ENCODE measurements at regions of chr10 and their contacts with region 1.

Region 1: DNA sequence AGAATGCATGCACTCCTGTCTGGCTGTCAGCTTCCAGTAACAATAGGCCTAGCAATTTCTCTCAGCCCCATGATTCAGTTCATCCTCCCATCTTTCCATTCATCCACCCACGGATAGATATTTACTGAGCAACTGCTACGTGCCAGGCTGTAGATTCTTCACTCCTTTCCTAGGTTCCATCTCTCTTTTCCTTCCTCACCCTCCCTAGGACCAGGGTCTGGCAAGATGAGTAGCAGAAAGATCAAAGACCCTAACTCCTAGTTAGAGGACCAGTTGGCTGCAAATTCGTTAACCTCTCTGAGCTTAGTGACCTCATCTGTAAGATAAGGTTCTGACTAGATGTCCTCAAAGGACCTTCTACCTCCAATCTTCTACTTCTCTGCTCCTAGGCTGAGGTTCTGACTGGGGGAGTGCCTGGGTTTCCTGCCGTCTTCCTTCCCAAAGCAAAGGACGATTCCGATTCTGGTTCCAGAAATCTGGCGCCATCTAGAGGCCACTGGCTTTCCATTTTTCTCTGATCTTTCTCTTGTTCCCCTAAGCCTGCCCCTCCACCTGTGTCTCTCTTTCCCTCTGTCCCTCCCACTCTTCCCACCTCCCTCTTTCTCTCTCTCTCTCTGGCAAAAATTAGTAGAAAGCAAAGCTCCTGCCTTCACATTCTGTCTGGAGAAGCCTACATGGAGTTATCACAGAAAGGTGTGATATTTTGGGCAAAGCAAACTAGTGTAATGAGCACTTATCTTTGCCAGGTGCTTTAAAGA is 26.2 kb downstream of the TBATA start:
- DNase-seq: peak; percentile 33 to 95 (median 82)

Region 2: DNA sequence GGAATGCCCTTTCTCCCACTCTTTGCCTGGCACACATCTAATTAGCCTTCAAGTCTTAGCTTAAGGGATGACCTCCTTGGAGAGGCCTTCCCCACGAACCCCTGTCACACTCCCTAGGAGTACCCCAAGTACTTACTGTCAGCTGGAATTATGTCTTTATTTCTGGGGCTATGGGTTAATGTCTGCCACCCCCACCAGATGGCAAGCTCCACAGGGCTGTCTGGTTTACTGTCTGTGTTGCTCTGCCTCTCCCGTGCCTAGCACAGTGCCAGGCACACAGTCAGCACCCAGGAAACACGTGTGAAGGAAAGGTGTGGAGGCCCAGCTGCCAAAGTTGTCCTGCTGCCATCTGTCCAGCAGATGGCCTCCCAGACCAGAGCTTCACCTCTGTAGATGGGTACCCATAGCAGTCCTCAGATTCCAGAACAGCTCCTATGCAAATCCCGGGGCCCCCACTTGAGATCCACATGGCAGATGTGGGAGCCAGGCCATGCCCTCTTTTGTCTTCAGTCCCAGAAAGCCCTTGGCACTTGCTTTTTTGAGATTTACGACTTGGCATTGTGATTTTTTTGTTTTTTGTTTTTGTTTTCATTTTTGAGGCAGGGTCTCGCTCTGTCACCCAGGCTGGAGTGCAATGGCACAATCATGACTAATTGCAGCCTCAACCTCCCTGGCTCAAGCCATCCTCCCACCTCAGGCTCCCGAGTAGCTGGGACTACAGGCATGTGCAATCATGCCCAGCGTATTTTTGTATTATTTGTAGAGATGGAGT is 297.5 kb before region 1 on chr10:
- intact Hi-C with region 1: loop called (anchors 5 kb)
- DNase-seq: peak in 8 of 10 donors; percentile 22 to 92 (median 58)

Region 3: GRCh38 chr10:70619271-70620019 is 139.5 kb before region 1 on chr10:
- intact Hi-C with region 1: loop called (anchors 1 kb)
- DNase-seq: no peak

Region 4: GRCh38 chr10:70672165-70673042 is 86.5 kb before region 1 on chr10 and contains the start of gene ADAMTS14:
- intact Hi-C with region 1: loop called (anchors 5 kb)
- DNase-seq: peak in 9 of 10 donors; percentile 47 to 96 (median 65)

Region 5: GRCh38 chr10:70744617-70745143 is 14.3 kb before region 1 on chr10:
- intact Hi-C with region 1: no loop called
- DNase-seq: peak in 1 of 10 donors; percentile 10

Region 6: GRCh38 chr10:70880077-70880534 is 121.2 kb after region 1 on chr10:
- intact Hi-C with region 1: loop called (anchors 1 kb)
- DNase-seq: peak; percentile 60 to 97 (median 84)